ENCODE measurements at regions of chr6 and their contacts with region 1.

Region 1: GRCh38 chr6:28281288-28282064 is at the start of gene PGBD1:
- DNase-seq: peak; percentile 92
- H3K4me3 ChIP-seq: peak within 1 kb of the TSS; percentile 93 to 98
- H3K27ac ChIP-seq: peak within 1 kb of the TSS; percentile 35 to 83; a peak in 3 of 4 replicates
- H3K4me1 ChIP-seq: peaks cover 0 to 7% of the 10 kb centered on the region in 2 experiments; a peak in 2 of 4 replicates
- H3K27me3 ChIP-seq: no peaks in the 10 kb centered on the region
- CTCF ChIP-seq: no peak
- EP300 ChIP-seq: no peak
- RAD21 ChIP-seq: no peak; the same call in 1 of the 2 replicates
- polyA plus RNA-seq, gene PGBD1: 2.5 and 2.7 TPM in 2 replicates

Region 2: DNA sequence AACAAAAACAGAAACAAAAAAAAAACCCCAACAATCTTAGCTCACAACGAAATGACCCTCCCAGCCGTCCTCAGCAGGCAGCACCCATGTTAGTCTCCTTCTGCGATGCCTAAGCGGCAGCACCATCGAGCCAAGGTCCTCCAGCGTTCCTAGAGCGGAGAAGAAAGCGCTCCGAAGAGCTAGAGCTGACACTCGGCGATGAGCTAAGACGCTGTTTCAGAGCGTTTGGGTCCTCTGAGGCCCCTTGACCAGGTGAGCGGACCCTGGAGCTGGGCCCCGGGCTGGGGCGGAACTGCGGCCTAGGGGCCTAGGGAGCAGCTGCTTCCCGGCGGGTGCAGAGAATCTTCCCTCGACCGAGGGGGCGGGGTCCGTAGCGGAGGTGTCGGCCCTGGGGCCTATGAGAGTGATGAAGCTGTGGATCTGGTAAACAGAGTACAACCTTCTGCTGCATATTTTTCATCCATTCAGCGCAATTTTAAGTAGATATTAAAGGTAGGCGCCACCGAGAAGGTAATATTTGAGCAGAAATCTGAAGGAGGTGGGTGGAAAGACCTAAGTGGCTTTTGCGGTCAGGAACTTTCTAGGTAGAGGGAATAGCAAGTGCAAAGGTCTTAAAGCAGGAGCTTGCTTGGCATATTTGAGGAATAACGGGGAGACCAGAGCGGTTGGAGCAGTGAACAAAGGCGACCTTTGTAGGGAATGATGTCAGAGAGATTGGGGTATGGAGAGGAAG is 14.3 kb before region 1 on chr6 and contains the start of gene ZSCAN26:
- CTCF ChIA-PET with region 1: interaction called, 3 read pairs
- POLR2A ChIA-PET with region 1: interaction called, 22 read pairs
- DNase-seq: peak; percentile 85
- H3K4me3 ChIP-seq: peak within 1 kb of the TSS; percentile 76 to 85
- H3K27ac ChIP-seq: peak within 1 kb of the TSS; percentile 71 to 96
- H3K4me1 ChIP-seq: peaks cover 0 to 10% of the 10 kb centered on the region in 2 experiments; a peak in 3 of 4 replicates
- H3K27me3 ChIP-seq: no peaks in the 10 kb centered on the region
- CTCF ChIP-seq: no peak
- EP300 ChIP-seq: no peak
- RAD21 ChIP-seq: no peak
- polyA plus RNA-seq, gene ZSCAN26: 11.0 and 14.0 TPM in 2 replicates

Region 3: GRCh38 chr6:28335564-28336283 is 54.2 kb after region 1 on chr6 and contains the start of gene ZSCAN31:
- CTCF ChIA-PET with region 1: interaction called, 4 read pairs
- POLR2A ChIA-PET with region 1: interaction called, 14 read pairs
- DNase-seq: peak; percentile 81
- H3K4me3 ChIP-seq: peak within 1 kb of the TSS; percentile 74 to 93
- H3K27ac ChIP-seq: peak within 1 kb of the TSS; percentile 92 to 99
- H3K4me1 ChIP-seq: peaks cover 0 to 7% of the 10 kb centered on the region in 2 experiments; a peak in 2 of 4 replicates
- H3K27me3 ChIP-seq: no peaks in the 10 kb centered on the region
- CTCF ChIP-seq: no peak
- EP300 ChIP-seq: no peak
- RAD21 ChIP-seq: no peak
- polyA plus RNA-seq, gene ZSCAN31: 1.9 and 2.1 TPM in 2 replicates

Region 4: GRCh38 chr6:28349892-28350737 is 68.6 kb after region 1 on chr6 and contains the start of gene ZKSCAN3:
- CTCF ChIA-PET with region 1: interaction called, 10 read pairs
- POLR2A ChIA-PET with region 1: interaction called, 10 read pairs
- DNase-seq: peak; percentile 79
- H3K4me3 ChIP-seq: peak within 1 kb of the TSS; percentile 89 to 92
- H3K27ac ChIP-seq: peak within 1 kb of the TSS; percentile 49 to 83
- H3K4me1 ChIP-seq: peaks cover under 1 to 9% of the 10 kb centered on the region in 2 experiments; a peak in 3 of 4 replicates
- H3K27me3 ChIP-seq: peaks cover 6% of the 10 kb centered on the region; the same call in 1 of the 2 replicates
- CTCF ChIP-seq: no peak
- EP300 ChIP-seq: no peak
- RAD21 ChIP-seq: no peak; the same call in none of the 2 replicates
- polyA plus RNA-seq, gene ZKSCAN3: 2.6 and 3.0 TPM in 2 replicates

Measured in SK-N-SH (cell line).